ENCODE measurements at regions of chr2 and their contacts with region 1.

Region 1: GRCh38 chr2:237700512-237701032 is 73.2 kb downstream of the LRRFIP1 start:
- DNase-seq: peak; percentile 54
- ATAC-seq: peak; percentile 68
- H3K4me3 ChIP-seq: peak overlapping the region; percentile 56
- H3K27ac ChIP-seq: peak overlapping the region; percentile 77
- H3K4me1 ChIP-seq: peaks cover 70% of the 10 kb centered on the region
- H3K27me3 ChIP-seq: no peaks in the 10 kb centered on the region
- CTCF ChIP-seq: no peak
- EP300 ChIP-seq: peak in 1 of 2 experiments; percentile 15; a peak in 1 of 4 replicates
- POLR2A ChIP-seq: peak; percentile 36
- RAD21 ChIP-seq: no peak

Region 2: GRCh38 chr2:237685408-237685807 is 15.2 kb before region 1 on chr2:
- CTCF ChIA-PET with region 1: interaction called, 20 read pairs
- POLR2A ChIA-PET with region 1: interaction called, 5 read pairs
- RAD21 ChIA-PET with region 1: interaction called, 11 read pairs
- SMC1A ChIA-PET with region 1: interaction called, 18 read pairs
- in situ Hi-C with region 1: no loop called
- intact Hi-C with region 1: no loop called
- DNase-seq: no peak
- ATAC-seq: no peak
- H3K4me3 ChIP-seq: no peak overlapping the region
- H3K27ac ChIP-seq: no peak overlapping the region
- H3K4me1 ChIP-seq: peaks cover 15% of the 10 kb centered on the region
- H3K27me3 ChIP-seq: no peaks in the 10 kb centered on the region
- CTCF ChIP-seq: peak in 1 of 3 experiments; percentile 6; a peak in 1 of 6 replicates
- EP300 ChIP-seq: no peak
- POLR2A ChIP-seq: no peak
- RAD21 ChIP-seq: no peak

Measured in GM12878 (cell line).